Right ventricle myocardium inferior (tissue), 1 donor: ENCODE measurements at regions of chr22 and their contacts with region 1.

Region 1: DNA sequence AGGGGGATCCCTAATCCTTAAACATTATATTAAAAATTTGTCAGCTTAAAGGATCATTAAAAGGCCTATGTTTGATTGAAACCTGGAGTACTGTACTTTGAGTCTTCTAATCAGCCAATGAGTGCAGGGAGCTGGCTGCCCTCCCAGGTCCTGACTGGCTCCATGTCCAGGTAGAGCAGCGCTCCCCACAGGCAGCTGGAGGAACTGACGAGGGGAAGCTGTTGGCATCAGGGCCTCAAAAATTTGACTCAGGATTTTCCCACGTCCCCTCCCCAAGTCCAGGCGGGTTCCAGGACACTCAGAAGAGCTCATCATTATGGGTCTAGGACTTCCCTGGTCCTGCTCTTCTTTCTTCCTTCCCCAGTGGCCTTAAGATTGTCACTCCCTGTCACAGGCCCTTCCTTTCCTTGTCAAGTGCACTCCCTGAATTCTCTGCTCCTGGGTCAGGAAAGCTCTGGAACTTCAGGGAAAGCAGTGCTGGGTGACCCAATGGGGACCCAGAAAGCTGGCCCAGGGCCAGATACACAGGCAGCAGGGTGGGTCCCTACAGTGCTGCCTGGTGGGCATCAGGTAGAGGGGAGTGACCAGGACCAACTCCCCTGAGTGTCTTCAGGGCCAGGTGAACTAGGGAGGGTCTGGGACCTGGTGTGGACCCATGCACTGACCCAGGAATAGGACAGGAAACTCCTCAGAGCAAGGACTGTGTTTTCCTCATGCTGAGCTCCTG is 65.5 kb downstream of the GGTLC2 start:
- DNase-seq: no peak
- ATAC-seq: no peak

Region 2: GRCh38 chr22:22655452-22656290 is 54.2 kb before region 1 on chr22:
- intact Hi-C with region 1: no loop called
- DNase-seq: no peak
- ATAC-seq: no peak

Region 3: GRCh38 chr22:22767876-22768602 is 58.2 kb after region 1 on chr22:
- intact Hi-C with region 1: loop called (anchors 5 kb)
- DNase-seq: no peak
- ATAC-seq: no peak